ENCODE measurements at regions of chr16 and their contacts with region 1.

Region 1: GRCh38 chr16:31696968-31697743 is 169.5 kb downstream of the AHSP start:
- ATAC-seq: peak in 3 of 8 experiments; percentile 34 to 63 (median 35)
- H3K4me3 ChIP-seq: no peak overlapping the region
- H3K27ac ChIP-seq: no peak overlapping the region
- H3K4me1 ChIP-seq: peaks cover 5 to 9% of the 10 kb centered on the region in 2 donors

Region 2: GRCh38 chr16:31507929-31508705 is 189.0 kb before region 1 on chr16 and contains the start of gene RUSF1:
- in situ Hi-C with region 1: loop called in 2 of 9 experiments (anchors 25 kb)
- ATAC-seq: peak; percentile 88 to 97 (median 94)
- H3K4me3 ChIP-seq: peak within 1 kb of the TSS; percentile 74 to 100 (median 89)
- H3K27ac ChIP-seq: peak within 1 kb of the TSS; percentile 88 to 98
- H3K4me1 ChIP-seq: peaks cover 14 to 15% of the 10 kb centered on the region in 2 donors
- total RNA-seq, gene RUSF1: 36.8 to 82.0 (median 56.6) TPM

Region 3: DNA sequence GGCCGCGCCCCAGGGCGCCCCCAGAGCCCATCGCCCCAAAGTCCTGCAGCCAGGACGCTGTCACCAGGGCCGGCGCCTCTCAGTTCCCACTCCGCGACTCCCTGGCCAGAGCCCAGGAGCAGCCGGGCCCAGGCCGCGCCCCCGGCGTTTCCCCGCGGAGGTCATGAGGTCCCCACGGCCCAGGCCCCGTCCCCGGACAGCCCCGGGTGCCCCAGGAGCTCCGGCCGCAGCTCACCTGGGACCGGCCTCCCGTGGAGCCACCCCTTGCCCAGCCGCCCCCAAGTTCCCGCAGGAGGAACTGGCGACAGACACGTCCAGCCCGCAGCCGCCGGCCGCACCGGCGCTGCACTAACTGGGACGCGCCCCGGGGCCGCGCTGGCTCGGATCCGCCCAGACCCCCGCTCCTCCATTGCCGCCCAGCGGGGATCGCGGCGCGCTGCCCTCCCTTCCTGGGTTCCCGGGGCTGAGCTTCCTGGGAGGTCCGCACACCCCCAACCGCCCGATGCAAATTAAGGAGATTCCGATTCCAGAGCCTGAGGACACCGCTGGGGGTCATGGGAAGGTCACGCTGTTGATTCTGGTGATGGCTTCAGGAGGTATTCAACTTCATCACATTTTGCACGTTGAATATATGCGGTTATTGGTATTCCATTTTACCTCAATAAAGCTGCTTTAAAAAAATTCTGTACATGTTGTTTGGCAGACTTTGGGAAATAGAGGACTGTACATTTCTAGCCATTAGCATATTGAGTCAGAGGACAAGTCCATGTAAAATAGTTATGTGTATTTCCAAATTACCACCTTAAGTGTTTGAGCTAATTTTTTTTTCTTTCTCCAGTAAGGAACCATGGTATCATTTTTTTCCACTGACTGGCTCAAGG is 159.6 kb before region 1 on chr16:
- in situ Hi-C with region 1: loop called in 1 of 9 experiments (anchors 25 kb)
- ATAC-seq: peak; percentile 29 to 97 (median 91)
- H3K4me3 ChIP-seq: peak overlapping the region; percentile 3 to 38 (median 17)
- H3K27ac ChIP-seq: peak overlapping the region in 1 of 2 donors; percentile 60
- H3K4me1 ChIP-seq: peaks cover 0 to 3% of the 10 kb centered on the region in 2 donors

Region 4: DNA sequence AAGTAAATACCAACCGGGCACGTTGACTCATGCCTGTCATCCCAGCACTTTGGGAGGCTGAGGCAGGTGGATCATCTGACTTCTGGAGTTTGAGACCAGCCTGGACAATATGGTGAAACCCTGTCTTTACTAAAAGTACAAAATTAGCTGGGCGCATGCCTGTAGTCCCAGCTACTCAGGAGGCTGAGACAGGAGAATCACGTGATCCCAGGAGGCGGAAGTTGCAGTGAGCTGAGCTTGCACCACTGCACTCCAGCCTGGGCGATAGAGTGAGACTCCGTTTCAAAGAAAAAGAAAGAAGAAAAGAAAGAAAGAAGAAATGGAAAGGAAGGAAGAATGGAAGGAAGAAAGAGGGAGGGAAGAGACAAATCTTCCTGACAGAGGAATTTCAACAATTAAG is 60.7 kb before region 1 on chr16:
- in situ Hi-C with region 1: no loop called
- ATAC-seq: no peak
- H3K4me3 ChIP-seq: no peak overlapping the region
- H3K27ac ChIP-seq: no peak overlapping the region
- H3K4me1 ChIP-seq: no peaks in the 10 kb centered on the region

Region 5: DNA sequence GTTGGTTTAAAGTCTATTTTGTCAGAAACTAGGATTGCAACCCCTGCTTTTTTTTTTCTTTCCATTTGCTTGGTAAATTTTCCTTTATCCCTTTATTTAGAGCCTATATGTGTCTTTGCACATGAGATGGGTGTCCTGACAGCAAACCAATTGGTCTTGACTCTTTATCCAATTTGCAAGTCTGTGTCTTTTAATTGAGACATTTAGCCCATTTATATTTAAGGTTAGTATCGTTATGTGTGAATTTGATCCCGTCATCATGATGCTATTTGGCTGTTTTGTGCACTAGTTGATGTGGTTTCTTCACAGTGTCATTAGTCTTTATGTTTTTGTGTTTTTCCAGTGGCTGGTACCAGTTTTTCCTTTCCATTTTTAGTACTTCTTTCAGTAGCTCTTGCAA is 48.7 kb after region 1 on chr16:
- in situ Hi-C with region 1: no loop called
- ATAC-seq: no peak
- H3K4me3 ChIP-seq: no peak overlapping the region
- H3K27ac ChIP-seq: no peak overlapping the region
- H3K4me1 ChIP-seq: no peaks in the 10 kb centered on the region

Measured in motor neuron (in vitro differentiated cells).